HepG2 (cell line): ENCODE measurements at regions of chr6 and their contacts with region 1.

Region 1: GRCh38 chr6:27518881-27519795 is 46.2 kb upstream of the ZNF184 start:
- DNase-seq: peak; percentile 82
- ATAC-seq: peak; percentile 83
- H3K4me3 ChIP-seq: peak overlapping the region; percentile 72 to 86 (median 85)
- H3K27ac ChIP-seq: peak overlapping the region; percentile 39
- H3K4me1 ChIP-seq: peaks cover 19% of the 10 kb centered on the region
- H3K27me3 ChIP-seq: peaks cover 2 to 18% of the 10 kb centered on the region in 2 experiments; a peak in 1 of 5 replicates
- CTCF ChIP-seq: peak; percentile 73
- EP300 ChIP-seq: no peak
- POLR2A ChIP-seq: no peak
- RAD21 ChIP-seq: peak; percentile 43; the same call in 1 of the 2 replicates

Region 2: GRCh38 chr6:26312501-26313390 is 1206.4 kb before region 1 on chr6:
- CTCF ChIA-PET with region 1: no interaction called
- POLR2A ChIA-PET with region 1: no interaction called
- in situ Hi-C with region 1: loop called (anchors 25 kb)
- intact Hi-C with region 1: no loop called
- DNase-seq: peak; percentile 92
- ATAC-seq: peak; percentile 77
- H3K4me3 ChIP-seq: peak overlapping the region; percentile 67 to 80 (median 67)
- H3K27ac ChIP-seq: peak overlapping the region; percentile 55
- H3K4me1 ChIP-seq: peaks cover 72% of the 10 kb centered on the region
- H3K27me3 ChIP-seq: no peaks in the 10 kb centered on the region
- CTCF ChIP-seq: no peak
- EP300 ChIP-seq: peak in 1 of 2 experiments; percentile 68; a peak in 2 of 4 replicates
- POLR2A ChIP-seq: no peak
- RAD21 ChIP-seq: no peak

Region 3: DNA sequence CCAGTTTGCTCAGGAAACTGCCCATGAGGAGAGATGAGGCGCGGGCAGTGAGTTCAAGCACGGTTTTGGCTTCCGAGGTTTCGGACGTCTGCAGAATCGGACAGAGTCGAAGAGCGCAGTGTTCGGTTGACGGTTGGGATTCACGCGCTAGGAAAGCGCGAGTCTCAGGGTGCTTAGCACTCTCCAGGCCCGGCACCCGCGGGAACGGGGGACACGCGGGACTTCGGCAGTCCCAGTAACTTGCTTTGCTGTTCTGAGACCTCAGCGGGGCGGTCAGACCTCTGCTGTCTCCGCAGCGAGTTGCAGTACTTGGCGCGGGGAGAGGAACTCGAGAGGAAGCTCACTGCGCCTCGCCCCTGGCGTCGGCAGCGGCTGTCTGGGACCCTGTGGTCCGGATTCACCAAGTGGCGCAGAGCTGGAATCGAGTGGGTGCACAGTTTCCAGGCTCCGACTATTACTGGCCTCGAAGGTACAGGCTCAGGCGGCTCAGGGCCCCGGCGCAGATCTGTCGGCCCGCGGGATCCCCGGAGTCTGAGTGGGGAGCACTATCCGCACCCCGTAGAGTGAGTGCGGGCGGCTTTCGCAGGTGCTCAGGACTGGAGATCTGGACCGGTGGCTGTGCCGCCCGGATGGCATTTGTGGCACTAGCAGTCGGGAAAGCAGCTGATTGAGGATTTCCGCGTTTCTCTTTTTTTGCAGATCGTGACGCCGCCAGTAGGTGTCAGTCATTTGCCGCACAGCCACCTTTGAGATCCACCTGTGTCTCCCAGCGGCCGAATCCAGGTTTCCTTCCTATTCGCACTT is 206.8 kb before region 1 on chr6 and contains the start of gene POM121L2:
- CTCF ChIA-PET with region 1: interaction called, 3 read pairs
- POLR2A ChIA-PET with region 1: no interaction called
- in situ Hi-C with region 1: no loop called
- intact Hi-C with region 1: loop called (anchors 1 kb)
- DNase-seq: peak; percentile 71
- ATAC-seq: peak; percentile 87
- H3K4me3 ChIP-seq: peak within 1 kb of the TSS; percentile 34 to 70 (median 60); a peak in 5 of 6 replicates
- H3K27ac ChIP-seq: no peak within 1 kb of the TSS
- H3K4me1 ChIP-seq: peaks cover 12% of the 10 kb centered on the region
- H3K27me3 ChIP-seq: peaks cover 2 to 22% of the 10 kb centered on the region in 2 experiments; a peak in 2 of 5 replicates
- CTCF ChIP-seq: peak; percentile 97
- EP300 ChIP-seq: no peak
- POLR2A ChIP-seq: no peak
- RAD21 ChIP-seq: peak; percentile 89
- total RNA-seq, gene POM121L2: not detected in 2 replicates

Region 4: DNA sequence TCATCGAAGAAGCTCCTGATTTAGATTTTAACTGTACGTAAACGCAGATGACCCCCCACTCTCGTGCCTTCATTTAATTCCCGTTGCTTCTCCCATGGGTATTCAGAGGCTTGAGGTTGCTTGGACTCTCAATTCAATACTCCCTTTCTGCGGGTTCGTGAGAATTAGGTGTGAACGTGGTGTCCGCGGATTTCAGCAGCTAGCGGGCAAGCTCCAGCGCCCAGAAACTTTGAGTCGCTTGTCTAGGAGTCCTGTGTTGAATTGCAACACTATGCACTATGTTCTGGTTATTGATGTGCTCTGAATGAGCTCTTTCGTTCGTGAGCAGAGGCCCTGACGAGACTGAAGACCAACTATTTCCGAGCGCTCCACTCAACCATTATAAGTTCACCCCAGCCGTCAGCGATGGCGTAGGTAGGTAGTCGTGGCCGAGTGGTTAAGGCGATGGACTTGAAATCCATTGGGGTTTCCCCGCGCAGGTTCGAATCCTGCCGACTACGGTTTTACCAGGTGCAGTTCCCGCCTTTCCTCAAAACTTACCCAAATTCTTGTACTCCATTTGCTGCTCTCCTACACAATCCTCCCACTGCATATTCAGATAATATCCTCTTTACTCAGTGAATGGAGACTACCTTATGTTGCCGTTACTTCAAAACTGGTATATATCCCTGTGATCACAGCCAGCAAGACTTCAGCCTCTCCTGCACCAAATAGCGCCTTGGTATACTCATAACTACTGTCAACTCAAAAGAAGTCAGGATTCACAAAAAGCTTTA is 26.3 kb after region 1 on chr6:
- CTCF ChIA-PET with region 1: no interaction called
- POLR2A ChIA-PET with region 1: interaction called, 3 read pairs
- in situ Hi-C with region 1: no loop called
- intact Hi-C with region 1: loop called (anchors 1 kb)
- DNase-seq: peak; percentile 90
- ATAC-seq: peak; percentile 80
- H3K4me3 ChIP-seq: peak overlapping the region; percentile 68 to 80 (median 78)
- H3K27ac ChIP-seq: peak overlapping the region; percentile 55
- H3K4me1 ChIP-seq: peaks cover 29% of the 10 kb centered on the region
- H3K27me3 ChIP-seq: no peaks in the 10 kb centered on the region; a peak in 1 of 5 replicates
- CTCF ChIP-seq: no peak
- EP300 ChIP-seq: no peak
- POLR2A ChIP-seq: no peak
- RAD21 ChIP-seq: no peak

Region 5: DNA sequence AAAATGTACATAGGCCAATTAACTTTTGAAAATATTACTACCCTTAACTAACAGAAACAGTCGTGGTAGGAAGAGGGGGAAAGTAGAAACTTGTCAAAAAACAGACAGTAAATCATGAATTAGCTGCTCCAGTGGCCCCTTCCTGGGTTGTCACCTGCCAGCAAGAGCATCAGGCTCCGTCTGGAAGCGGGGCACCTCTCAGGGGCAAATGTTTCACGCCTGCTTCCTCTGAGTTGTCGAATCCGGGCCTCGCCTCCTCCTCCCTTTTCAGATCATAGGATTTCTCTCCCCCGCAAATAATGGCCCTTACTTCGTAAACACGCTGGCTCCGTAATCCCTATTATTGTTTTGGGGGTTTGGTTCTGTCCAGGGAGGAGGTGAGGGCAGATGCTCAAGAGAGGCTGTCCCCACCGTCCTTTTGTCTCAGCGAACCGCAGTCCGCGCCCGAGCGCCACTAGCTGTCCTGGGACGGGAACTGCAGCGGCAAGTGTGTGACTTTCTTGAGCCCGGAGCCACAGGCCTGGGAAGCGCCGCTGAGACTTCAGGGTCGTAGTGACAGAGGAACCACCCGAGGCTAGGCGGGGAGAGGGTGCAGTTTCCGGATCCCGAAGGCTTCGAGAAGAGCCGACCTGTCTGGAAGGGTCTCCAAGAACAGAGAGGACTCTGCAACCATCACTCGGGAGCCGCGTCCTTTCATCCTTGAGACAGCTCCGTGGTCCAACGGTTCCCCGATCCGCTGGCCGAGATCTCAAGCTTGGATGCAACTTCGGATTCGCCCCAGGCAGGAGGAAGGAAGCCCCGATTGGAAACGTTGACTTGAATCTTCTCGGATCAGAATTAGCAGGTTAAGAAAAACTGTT is 168.2 kb after region 1 on chr6:
- CTCF ChIA-PET with region 1: no interaction called
- POLR2A ChIA-PET with region 1: interaction called, 3 read pairs
- in situ Hi-C with region 1: no loop called
- intact Hi-C with region 1: loop called (anchors 1 kb)
- DNase-seq: peak; percentile 79
- ATAC-seq: peak; percentile 85
- H3K4me3 ChIP-seq: peak overlapping the region; percentile 65 to 93 (median 78)
- H3K27ac ChIP-seq: peak overlapping the region; percentile 15
- H3K4me1 ChIP-seq: peaks cover 56% of the 10 kb centered on the region
- H3K27me3 ChIP-seq: no peaks in the 10 kb centered on the region; a peak in 1 of 5 replicates
- CTCF ChIP-seq: peak; percentile 95
- EP300 ChIP-seq: no peak
- POLR2A ChIP-seq: no peak
- RAD21 ChIP-seq: peak; percentile 70